ENCODE measurements at regions of chr5 and their contacts with region 1.

Region 1: GRCh38 chr5:66609615-66610014 is 13.4 kb downstream of the MAST4 start:
- DNase-seq: no peak
- ATAC-seq: no peak
- H3K4me3 ChIP-seq: no peak overlapping the region
- H3K27ac ChIP-seq: no peak overlapping the region
- H3K4me1 ChIP-seq: peaks cover 0 to 58% (median 7%) of the 10 kb centered on the region in 9 donors
- H3K27me3 ChIP-seq: no peaks in the 10 kb centered on the region
- CTCF ChIP-seq: no peak

Region 2: GRCh38 chr5:66306105-66306843 is 303.3 kb before region 1 on chr5:
- intact Hi-C with region 1: no loop called
- DNase-seq: peak in 1 of 2 donors; percentile 46
- ATAC-seq: peak in 7 of 8 donors; percentile 70 to 89 (median 79)
- H3K4me3 ChIP-seq: no peak overlapping the region
- H3K27ac ChIP-seq: peak overlapping the region in 3 of 10 donors; percentile 9 to 60 (median 22)
- H3K4me1 ChIP-seq: peaks cover 0 to 32% (median 23%) of the 10 kb centered on the region in 9 donors
- H3K27me3 ChIP-seq: peaks cover 0 to 3% (median 0%) of the 10 kb centered on the region in 7 donors
- CTCF ChIP-seq: peak; percentile 65 to 88 (median 79)

Region 3: GRCh38 chr5:66724349-66725139 is 114.9 kb after region 1 on chr5:
- intact Hi-C with region 1: loop called in 1 of 10 experiments (anchors 10 kb)
- DNase-seq: no peak
- ATAC-seq: no peak
- H3K4me3 ChIP-seq: no peak overlapping the region
- H3K27ac ChIP-seq: no peak overlapping the region
- H3K4me1 ChIP-seq: peaks cover 0 to 14% (median 0%) of the 10 kb centered on the region in 9 donors
- H3K27me3 ChIP-seq: no peaks in the 10 kb centered on the region
- CTCF ChIP-seq: peak in 1 of 9 donors; percentile 20

Region 4: DNA sequence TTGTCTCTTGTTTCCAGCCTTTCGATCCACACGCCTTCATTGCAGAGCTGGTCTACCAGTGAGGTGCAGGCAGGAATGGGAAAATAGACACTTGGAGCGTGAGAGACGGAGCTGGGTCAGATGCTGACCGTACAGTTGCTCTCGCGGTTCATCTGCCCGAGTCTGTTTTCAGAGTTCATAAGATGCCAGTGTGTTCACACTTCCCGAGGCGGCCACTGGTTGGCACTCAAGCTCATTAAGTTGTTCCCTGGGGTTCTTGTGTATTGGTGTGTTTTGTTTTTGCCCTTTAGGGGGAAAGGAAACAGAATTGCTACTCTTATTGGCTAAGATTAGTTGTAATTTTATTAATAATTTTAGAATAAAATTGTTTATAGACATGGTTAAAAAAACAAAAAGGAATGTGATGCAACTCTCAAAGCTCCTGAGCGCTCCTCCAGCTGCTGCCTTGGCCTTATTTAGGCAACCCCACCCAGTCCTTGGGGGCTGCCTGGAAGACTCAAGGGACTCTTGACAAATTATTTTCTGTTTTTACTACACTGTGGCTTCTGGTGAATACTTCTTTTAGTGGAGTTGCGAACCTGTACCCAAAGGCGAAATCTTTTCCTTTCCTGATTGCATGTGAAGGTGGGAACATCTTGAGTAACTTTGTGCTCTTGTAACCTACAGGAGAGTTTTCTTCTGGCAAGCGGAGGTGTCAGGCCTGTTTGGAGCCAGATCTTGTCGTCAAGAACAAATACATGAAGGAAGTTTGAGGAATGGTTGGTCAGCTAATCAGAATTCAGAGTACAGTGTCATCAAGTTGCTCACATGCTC is 132.7 kb after region 1 on chr5:
- intact Hi-C with region 1: loop called in 1 of 10 experiments (anchors 10 kb)
- DNase-seq: peak; percentile 28 to 37
- ATAC-seq: peak in 7 of 8 donors; percentile 32 to 67 (median 52)
- H3K4me3 ChIP-seq: no peak overlapping the region
- H3K27ac ChIP-seq: peak overlapping the region in 8 of 10 donors; percentile 2 to 76 (median 19)
- H3K4me1 ChIP-seq: peaks cover 12 to 67% (median 44%) of the 10 kb centered on the region in 9 donors
- H3K27me3 ChIP-seq: no peaks in the 10 kb centered on the region
- CTCF ChIP-seq: peak; percentile 20 to 58 (median 51)

Measured in heart right ventricle (tissue), 16 donors.